Vagina (tissue), 2 donors: ENCODE measurements at regions of chr16 and their contacts with region 1.

Region 1: DNA sequence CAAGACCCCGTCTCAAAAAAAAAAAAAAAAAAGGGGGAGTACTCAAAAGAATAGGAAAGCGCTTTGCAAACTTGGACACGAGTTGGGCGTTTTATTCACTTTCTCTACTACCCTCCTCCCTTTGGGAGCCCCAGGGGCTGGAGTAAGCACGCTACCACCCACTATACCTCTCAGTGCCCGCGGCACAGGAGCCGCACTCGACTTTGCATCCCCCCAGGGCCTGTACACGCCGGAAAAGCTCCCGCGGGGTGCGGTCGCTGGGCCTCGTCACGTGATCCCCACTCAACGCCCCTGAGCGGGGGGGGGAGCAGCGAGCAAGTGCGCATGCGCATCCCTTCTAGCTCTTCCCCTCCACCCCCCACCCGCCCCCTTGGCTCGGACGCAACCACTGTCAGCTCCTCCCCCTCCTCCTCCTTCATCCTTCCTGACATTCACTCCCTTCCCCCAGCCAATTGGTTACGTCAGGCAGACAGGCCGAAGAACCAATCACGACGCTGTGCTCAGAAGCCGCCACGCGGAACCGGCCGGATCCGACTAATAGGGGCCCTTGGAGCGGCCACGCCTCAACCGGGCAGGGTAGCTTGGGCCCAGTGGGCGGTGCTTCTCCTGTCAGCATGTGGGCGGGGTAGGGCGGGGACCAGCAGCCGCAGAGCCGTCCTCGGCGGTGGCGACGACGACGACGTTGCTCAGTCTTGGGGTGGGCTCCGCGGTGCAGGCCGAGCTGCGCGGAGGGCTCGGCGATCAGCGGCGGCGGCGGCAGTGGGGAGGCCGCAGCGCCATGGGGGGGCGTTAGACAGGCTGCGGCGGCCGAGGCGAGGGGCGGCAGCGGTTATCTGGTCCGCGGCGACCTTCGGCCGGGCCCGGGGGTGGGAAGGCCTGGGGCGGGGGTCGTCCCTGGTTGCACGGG is at the start of gene HAPSTR1:
- DNase-seq: peak; percentile 99 to 100
- H3K4me3 ChIP-seq: peak within 1 kb of the TSS; percentile 70 to 98
- H3K27ac ChIP-seq: peak within 1 kb of the TSS; percentile 100
- H3K4me1 ChIP-seq: peaks cover 44% of the 10 kb centered on the region
- H3K27me3 ChIP-seq: no peaks in the 10 kb centered on the region
- CTCF ChIP-seq: no peak
- POLR2A ChIP-seq: peak; percentile 80 to 99
- total RNA-seq, gene HAPSTR1: 33.6 TPM

Region 2: GRCh38 chr16:8963825-8964441 is 127.3 kb before region 1 on chr16 and contains the start of gene USP7:
- intact Hi-C with region 1: loop called (anchors 5 kb)
- DNase-seq: no peak
- H3K4me3 ChIP-seq: peak within 1 kb of the TSS; percentile 80 to 84
- H3K27ac ChIP-seq: peak within 1 kb of the TSS; percentile 81
- H3K4me1 ChIP-seq: peaks cover 44% of the 10 kb centered on the region
- H3K27me3 ChIP-seq: no peaks in the 10 kb centered on the region
- CTCF ChIP-seq: no peak
- POLR2A ChIP-seq: peak in 1 of 2 donors; percentile 55
- total RNA-seq, gene USP7: 112 TPM

Region 3: DNA sequence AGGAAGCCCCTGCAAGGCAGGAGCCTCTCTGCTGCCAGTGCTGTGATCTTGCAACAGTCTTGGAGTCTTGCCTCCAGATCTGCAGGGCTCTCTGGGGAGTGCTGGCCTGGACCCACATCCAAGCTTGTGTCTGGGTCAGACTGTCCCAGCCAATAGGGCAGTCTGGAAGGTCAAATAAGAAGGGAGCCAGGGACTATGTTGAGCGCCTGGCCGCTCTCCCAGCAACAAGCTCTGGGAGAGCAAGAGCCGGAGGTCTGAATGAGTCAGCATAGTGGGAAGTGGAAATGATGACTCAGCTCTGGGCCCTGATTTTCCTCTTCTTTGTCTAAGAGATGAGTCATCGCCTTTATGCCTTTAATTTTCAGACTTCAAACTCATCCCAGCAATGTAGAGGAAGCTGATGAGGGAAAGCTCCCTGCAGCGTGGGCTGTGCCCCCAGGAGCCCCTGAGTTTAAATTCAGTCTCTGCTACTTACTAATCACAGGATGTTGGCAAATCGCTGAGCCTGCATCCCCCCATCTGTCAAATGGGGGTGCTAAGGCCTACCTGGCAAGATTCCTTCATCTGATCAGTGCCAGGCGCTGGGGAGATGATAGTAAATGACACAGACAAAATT is 43.4 kb before region 1 on chr16:
- intact Hi-C with region 1: loop called (anchors 5 kb)
- DNase-seq: peak in 1 of 2 donors; percentile 98
- H3K4me3 ChIP-seq: no peak overlapping the region
- H3K27ac ChIP-seq: peak overlapping the region; percentile 75
- H3K4me1 ChIP-seq: peaks cover 21% of the 10 kb centered on the region
- H3K27me3 ChIP-seq: no peaks in the 10 kb centered on the region
- CTCF ChIP-seq: no peak
- POLR2A ChIP-seq: no peak